Panc1 (cell line): ENCODE measurements at regions of chr6 and their contacts with region 1.

Region 1: DNA sequence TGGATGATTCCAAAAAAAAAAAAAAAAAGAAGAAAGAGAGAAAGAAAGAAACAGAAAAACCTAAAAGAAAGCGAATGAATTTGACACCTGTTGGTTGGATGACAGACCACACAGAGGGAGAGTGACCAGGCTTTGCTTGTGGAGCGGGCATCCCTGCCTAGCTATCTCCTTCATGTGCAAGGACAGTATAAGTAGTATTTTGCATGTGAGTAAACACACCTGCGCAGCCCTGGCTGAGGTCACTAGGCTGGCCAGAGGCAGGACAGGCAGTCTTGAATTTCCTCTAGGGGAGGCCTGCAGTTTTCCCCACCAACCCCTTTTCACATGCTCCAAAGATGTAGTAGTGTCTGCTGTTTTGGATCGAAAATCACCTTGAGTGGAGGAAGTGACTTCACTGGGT is 126.4 kb downstream of the CCDC170 start:
- DNase-seq: no peak
- ATAC-seq: no peak
- H3K4me3 ChIP-seq: no peak overlapping the region
- H3K27ac ChIP-seq: no peak overlapping the region
- H3K4me1 ChIP-seq: no peaks in the 10 kb centered on the region
- H3K27me3 ChIP-seq: no peaks in the 10 kb centered on the region
- CTCF ChIP-seq: no peak

Region 2: DNA sequence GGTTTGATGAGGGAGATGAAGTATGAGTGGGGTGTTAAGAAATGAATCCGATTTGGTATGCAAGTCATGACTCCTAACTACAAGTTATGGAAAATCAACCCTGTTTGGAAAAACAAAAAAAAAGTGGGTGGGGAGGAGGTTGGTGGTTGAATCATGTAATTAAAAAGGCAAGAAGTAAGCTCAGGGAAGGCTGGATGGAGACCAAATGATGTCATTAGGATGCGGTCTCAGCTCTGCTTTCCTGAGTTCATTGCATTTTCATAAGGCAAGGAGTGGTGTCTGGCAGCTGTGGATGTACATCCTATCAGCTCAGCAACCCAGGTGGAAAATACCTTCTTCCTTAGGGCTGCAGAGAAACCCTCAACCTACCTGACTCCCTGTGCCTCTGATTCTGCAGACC is 440.9 kb before region 1 on chr6:
- CTCF ChIA-PET with region 1: no interaction called
- POLR2A ChIA-PET with region 1: no interaction called
- in situ Hi-C with region 1: no loop called
- intact Hi-C with region 1: no loop called
- DNase-seq: no peak
- ATAC-seq: no peak
- H3K4me3 ChIP-seq: no peak overlapping the region
- H3K27ac ChIP-seq: no peak overlapping the region
- H3K4me1 ChIP-seq: no peaks in the 10 kb centered on the region
- H3K27me3 ChIP-seq: no peaks in the 10 kb centered on the region
- CTCF ChIP-seq: no peak

Region 3: GRCh38 chr6:151566557-151566956 is 53.6 kb before region 1 on chr6:
- CTCF ChIA-PET with region 1: no interaction called
- POLR2A ChIA-PET with region 1: no interaction called
- in situ Hi-C with region 1: no loop called
- intact Hi-C with region 1: no loop called
- DNase-seq: no peak
- ATAC-seq: no peak
- H3K4me3 ChIP-seq: no peak overlapping the region
- H3K27ac ChIP-seq: no peak overlapping the region
- H3K4me1 ChIP-seq: no peaks in the 10 kb centered on the region
- H3K27me3 ChIP-seq: no peaks in the 10 kb centered on the region
- CTCF ChIP-seq: no peak

Region 4: GRCh38 chr6:151633511-151634335 is 13.5 kb after region 1 on chr6:
- CTCF ChIA-PET with region 1: no interaction called
- POLR2A ChIA-PET with region 1: interaction called, 11 read pairs
- in situ Hi-C with region 1: no loop called
- intact Hi-C with region 1: no loop called
- DNase-seq: no peak
- ATAC-seq: no peak
- H3K4me3 ChIP-seq: no peak overlapping the region
- H3K27ac ChIP-seq: no peak overlapping the region
- H3K4me1 ChIP-seq: no peaks in the 10 kb centered on the region
- H3K27me3 ChIP-seq: no peaks in the 10 kb centered on the region
- CTCF ChIP-seq: no peak

Region 5: DNA sequence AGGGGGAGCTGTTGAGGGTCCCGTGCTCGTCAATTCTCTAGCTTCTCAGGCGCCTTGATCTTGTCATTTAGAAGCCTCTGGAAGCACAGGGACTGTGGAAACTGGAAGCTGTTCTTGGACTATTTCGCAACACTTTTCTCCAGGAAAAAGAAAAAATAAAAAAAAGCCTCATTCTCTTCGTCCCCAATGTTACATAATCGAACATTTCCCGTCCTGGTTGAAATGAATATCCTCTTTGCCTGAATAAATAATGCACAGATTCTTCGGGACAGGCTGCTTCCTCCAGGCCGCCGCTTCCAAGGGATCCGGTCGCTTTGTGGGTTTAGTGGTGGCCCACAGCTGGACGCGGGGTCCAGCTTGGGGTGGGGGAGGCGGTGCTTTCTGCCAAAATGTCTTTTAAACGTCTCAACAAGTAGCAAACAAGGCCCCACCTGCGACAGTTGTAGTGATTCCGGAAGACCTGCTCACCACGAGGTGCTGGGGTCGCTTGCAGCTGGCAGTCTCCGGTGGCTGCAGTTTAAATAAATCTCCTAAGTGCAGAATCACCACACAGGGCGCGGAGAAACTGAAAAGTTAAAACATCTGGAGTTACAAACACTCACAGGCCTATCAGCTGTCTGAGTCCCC is 61.4 kb after region 1 on chr6:
- CTCF ChIA-PET with region 1: no interaction called
- POLR2A ChIA-PET with region 1: no interaction called
- in situ Hi-C with region 1: no loop called
- intact Hi-C with region 1: no loop called
- DNase-seq: no peak
- ATAC-seq: no peak
- H3K4me3 ChIP-seq: no peak overlapping the region
- H3K27ac ChIP-seq: no peak overlapping the region
- H3K4me1 ChIP-seq: no peaks in the 10 kb centered on the region
- H3K27me3 ChIP-seq: no peaks in the 10 kb centered on the region
- CTCF ChIP-seq: no peak

Region 6: GRCh38 chr6:151822260-151823111 is 202.3 kb after region 1 on chr6:
- CTCF ChIA-PET with region 1: no interaction called
- POLR2A ChIA-PET with region 1: no interaction called
- in situ Hi-C with region 1: no loop called
- intact Hi-C with region 1: no loop called
- DNase-seq: no peak
- ATAC-seq: no peak
- H3K4me3 ChIP-seq: no peak overlapping the region
- H3K27ac ChIP-seq: no peak overlapping the region
- H3K4me1 ChIP-seq: no peaks in the 10 kb centered on the region
- H3K27me3 ChIP-seq: no peaks in the 10 kb centered on the region
- CTCF ChIP-seq: no peak